ENCODE measurements at regions of chr4 and their contacts with region 1.

Region 1: DNA sequence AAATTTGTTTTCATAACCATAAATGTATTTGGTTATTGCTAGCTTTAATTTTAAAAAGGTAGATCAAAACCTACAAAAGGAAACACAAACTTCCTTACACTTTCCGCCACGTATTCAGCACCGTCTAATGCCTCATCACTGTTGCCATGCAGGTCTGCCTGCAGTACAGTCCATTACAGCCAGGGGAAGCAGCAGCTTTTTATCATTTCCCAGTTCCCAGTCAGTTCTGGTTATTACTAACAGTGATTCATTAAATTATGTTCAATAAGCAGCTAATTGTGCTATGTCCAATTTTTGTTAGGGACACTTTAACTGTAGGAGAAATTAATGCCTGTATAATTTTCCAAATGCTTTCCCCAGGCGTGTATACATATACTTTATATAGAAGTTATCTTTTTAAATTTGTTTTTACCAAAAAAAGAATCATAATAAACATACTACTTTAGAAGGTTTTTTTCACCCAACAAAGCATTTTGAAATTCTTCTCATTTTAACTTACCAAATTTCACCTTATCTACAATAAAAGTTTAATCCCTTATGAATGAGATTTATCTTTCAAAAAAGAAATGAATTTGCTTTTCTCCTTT is 93.3 kb downstream of the ANXA3 start:
- DNase-seq: peak; percentile 79
- H3K4me3 Mint-ChIP-seq: peak overlapping the region; percentile 64
- H3K27ac Mint-ChIP-seq: peak overlapping the region; percentile 89
- H3K4me1 Mint-ChIP-seq: peaks cover 36% of the 10 kb centered on the region
- H3K27me3 Mint-ChIP-seq: no peaks in the 10 kb centered on the region
- CTCF ChIP-seq: peak; percentile 83

Region 2: GRCh38 chr4:78612398-78613178 is 32.2 kb before region 1 on chr4:
- CTCF ChIA-PET with region 1: interaction called, 23 read pairs
- POLR2A ChIA-PET with region 1: interaction called, 3 read pairs
- intact Hi-C with region 1: loop called (anchors 2 kb)
- DNase-seq: peak; percentile 68
- H3K4me3 Mint-ChIP-seq: no peak overlapping the region
- H3K27ac Mint-ChIP-seq: no peak overlapping the region
- H3K4me1 Mint-ChIP-seq: no peaks in the 10 kb centered on the region
- H3K27me3 Mint-ChIP-seq: no peaks in the 10 kb centered on the region
- CTCF ChIP-seq: peak; percentile 56

Region 3: DNA sequence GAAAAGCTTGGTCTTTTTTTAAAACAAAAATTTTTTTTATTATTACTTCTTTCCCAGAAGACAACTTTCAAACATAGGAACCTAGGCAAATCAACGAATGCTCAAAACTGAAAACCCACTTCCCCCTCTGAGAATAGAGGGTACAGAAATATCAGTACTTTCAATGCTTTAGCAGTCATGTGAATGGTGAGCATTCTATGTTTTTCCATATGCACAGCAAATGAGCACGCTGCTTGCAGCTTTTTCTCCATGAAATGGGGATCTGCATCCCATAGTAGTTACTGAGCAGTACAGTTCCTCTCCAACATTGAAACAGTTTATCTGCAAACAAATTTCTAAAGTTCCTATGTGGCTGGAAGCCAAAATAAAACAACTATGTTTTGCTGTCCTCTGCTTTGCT is 22.9 kb after region 1 on chr4:
- CTCF ChIA-PET with region 1: interaction called, 3 read pairs
- POLR2A ChIA-PET with region 1: interaction called, 31 read pairs
- intact Hi-C with region 1: no loop called
- DNase-seq: no peak
- H3K4me3 Mint-ChIP-seq: no peak overlapping the region
- H3K27ac Mint-ChIP-seq: no peak overlapping the region
- H3K4me1 Mint-ChIP-seq: peaks cover 15% of the 10 kb centered on the region
- H3K27me3 Mint-ChIP-seq: no peaks in the 10 kb centered on the region
- CTCF ChIP-seq: no peak

Region 4: DNA sequence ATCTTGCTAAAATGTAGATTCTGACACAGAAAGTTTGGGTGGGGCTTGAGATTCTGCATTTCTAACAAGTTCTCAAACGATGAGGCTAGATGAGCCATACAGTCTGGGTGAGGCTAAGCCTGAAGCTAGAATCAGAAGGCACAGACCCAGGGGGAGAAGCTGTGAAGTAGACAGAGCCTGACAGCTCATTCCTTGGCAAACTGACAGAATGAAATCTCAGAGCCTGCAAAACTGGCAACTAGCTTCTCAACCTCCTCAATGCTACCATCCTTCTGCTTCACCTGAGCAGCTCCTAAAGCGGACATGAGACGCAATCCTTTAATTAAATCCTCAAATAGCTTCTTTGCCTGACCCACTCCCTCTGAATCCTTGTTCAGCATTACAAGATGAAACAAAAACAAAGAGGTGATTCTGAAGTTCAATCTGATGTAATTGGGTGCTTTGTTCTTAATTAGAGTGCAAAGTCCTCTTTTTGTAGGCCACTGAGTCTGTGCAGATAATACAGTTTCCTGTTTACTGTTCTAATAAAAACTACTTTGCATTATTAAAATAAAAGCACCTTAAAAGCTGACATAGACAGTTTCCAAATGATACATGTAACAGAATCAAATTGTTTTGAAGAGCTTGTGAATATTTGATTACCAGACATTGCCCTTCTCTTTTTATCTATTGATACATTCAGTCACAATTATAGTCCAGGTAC is 60.3 kb after region 1 on chr4:
- CTCF ChIA-PET with region 1: interaction called, 7 read pairs
- POLR2A ChIA-PET with region 1: interaction called, 18 read pairs
- intact Hi-C with region 1: no loop called
- DNase-seq: peak; percentile 64
- H3K4me3 Mint-ChIP-seq: no peak overlapping the region
- H3K27ac Mint-ChIP-seq: no peak overlapping the region
- H3K4me1 Mint-ChIP-seq: peaks cover 7% of the 10 kb centered on the region
- H3K27me3 Mint-ChIP-seq: no peaks in the 10 kb centered on the region
- CTCF ChIP-seq: no peak

Region 5: GRCh38 chr4:78784236-78784865 is 139.5 kb after region 1 on chr4:
- CTCF ChIA-PET with region 1: interaction called, 4 read pairs
- POLR2A ChIA-PET with region 1: interaction called, 87 read pairs
- intact Hi-C with region 1: no loop called
- DNase-seq: no peak
- H3K4me3 Mint-ChIP-seq: no peak overlapping the region
- H3K27ac Mint-ChIP-seq: no peak overlapping the region
- H3K4me1 Mint-ChIP-seq: peaks cover 8% of the 10 kb centered on the region
- H3K27me3 Mint-ChIP-seq: no peaks in the 10 kb centered on the region
- CTCF ChIP-seq: no peak

Region 6: DNA sequence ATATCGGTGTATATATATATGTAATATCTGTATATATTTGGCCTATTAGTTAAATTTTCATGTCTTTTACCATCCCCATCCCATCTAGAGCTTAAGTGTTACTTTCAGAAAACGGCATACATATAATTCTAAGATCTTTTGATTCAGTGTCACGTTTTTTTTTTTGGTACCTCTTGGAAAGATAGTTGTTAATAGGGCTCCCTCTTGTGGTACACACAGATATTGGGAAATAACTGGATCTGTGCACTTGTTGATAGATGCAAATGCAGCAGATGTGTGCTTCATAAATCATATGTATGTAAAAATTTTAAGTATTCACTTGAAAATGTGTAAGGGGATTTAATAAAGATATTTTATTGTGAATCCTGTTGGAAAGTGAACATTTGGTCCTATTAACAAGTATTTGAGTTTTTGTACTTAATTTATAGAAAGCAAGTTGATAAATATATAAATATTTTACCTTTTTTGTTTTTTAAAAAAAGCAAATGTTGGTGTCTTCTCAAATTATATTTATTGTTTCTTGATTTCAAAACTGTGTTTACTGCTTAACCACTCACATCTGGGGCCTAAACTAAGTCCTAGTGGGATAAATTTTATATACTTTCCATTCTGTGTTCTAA is 219.7 kb after region 1 on chr4:
- CTCF ChIA-PET with region 1: interaction called, 37 read pairs
- POLR2A ChIA-PET with region 1: interaction called, 16 read pairs
- intact Hi-C with region 1: loop called (anchors 1 kb)
- DNase-seq: peak; percentile 78
- H3K4me3 Mint-ChIP-seq: no peak overlapping the region
- H3K27ac Mint-ChIP-seq: no peak overlapping the region
- H3K4me1 Mint-ChIP-seq: peaks cover 6% of the 10 kb centered on the region
- H3K27me3 Mint-ChIP-seq: no peaks in the 10 kb centered on the region
- CTCF ChIP-seq: peak; percentile 61